Activated naive CD8-positive, alpha-beta T cell treated with anti-CD3 and anti-CD28 coated beads, Interleukin-2, amount 10 ng/mL, durations not matched to agents 7 days and 5 days (primary cell): ENCODE measurements at regions of chr20 and their contacts with region 1.

Region 1: GRCh38 chr20:48706173-48707015 is 121.4 kb downstream of the PREX1 start:
- DNase-seq: no peak
- ATAC-seq: peak; percentile 40
- H3K4me3 Mint-ChIP-seq: peak overlapping the region; percentile 60
- H3K27ac Mint-ChIP-seq: peak overlapping the region; percentile 91
- H3K4me1 Mint-ChIP-seq: peaks cover 54% of the 10 kb centered on the region
- H3K27me3 Mint-ChIP-seq: no peaks in the 10 kb centered on the region

Region 2: DNA sequence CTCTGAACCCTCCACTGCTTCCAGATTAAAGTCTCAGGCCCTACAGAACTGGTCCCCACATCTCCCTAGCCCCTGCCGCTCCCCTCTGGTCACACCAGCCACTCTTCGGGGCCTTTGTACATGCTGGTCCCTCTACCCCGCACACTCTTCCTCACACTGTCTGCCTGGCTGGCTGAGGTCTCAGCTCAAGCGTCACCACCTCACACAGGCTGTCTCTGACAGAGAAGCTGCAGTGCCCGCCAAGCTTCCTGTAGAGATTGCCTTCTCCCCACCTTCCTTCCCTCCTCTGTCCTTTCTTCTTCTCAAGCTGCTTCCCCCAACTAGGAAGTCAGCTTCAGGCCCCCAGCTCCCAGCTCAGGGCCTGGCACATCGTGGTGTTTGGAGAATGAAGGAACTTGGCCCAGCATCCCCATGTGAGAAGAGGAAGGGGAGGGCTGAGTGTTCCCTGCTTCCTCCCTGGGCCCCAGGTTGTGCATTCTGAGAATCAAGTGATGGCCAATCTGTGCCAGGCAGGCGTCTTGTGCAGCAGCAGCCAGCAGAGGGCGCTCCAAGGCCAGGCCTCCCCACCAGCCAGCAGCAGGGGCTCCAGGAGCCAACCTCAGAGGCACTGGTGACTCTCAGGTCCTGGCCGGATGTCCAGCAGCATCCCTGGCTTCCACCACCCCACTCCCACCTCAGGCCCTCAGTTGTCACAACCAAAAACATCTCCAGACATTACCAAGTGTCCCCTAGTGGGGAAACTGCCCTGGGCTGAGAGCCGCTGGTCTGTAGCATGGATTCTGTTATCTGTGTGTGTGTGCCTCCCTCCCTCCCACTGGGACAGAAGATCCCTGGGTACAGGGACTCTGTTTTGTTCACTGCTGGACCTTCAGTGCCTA is 70.7 kb before region 1 on chr20:
- POLR2A ChIA-PET with region 1: no interaction called
- DNase-seq: peak; percentile 79
- ATAC-seq: peak; percentile 65
- H3K4me3 Mint-ChIP-seq: no peak overlapping the region
- H3K27ac Mint-ChIP-seq: peak overlapping the region; percentile 35
- H3K4me1 Mint-ChIP-seq: peaks cover 13% of the 10 kb centered on the region
- H3K27me3 Mint-ChIP-seq: no peaks in the 10 kb centered on the region

Region 3: GRCh38 chr20:48717095-48717672 is 10.8 kb after region 1 on chr20:
- POLR2A ChIA-PET with region 1: interaction called, 11 read pairs
- DNase-seq: peak; percentile 45
- ATAC-seq: no peak
- H3K4me3 Mint-ChIP-seq: peak overlapping the region; percentile 70
- H3K27ac Mint-ChIP-seq: peak overlapping the region; percentile 99
- H3K4me1 Mint-ChIP-seq: peaks cover 88% of the 10 kb centered on the region
- H3K27me3 Mint-ChIP-seq: no peaks in the 10 kb centered on the region

Region 4: GRCh38 chr20:49982346-49983122 is 1276.1 kb after region 1 on chr20 and contains the start of gene SNAI1:
- POLR2A ChIA-PET with region 1: no interaction called
- DNase-seq: peak; percentile 84
- ATAC-seq: peak; percentile 89
- H3K4me3 Mint-ChIP-seq: peak within 1 kb of the TSS; percentile 63
- H3K27ac Mint-ChIP-seq: peak within 1 kb of the TSS; percentile 25
- H3K4me1 Mint-ChIP-seq: peaks cover 21% of the 10 kb centered on the region
- H3K27me3 Mint-ChIP-seq: peaks cover 13% of the 10 kb centered on the region
- total RNA-seq, gene SNAI1: 0.40 to 0.75 TPM